ENCODE measurements at regions of chr7 and their contacts with region 1.

Region 1: GRCh38 chr7:41538810-41539724 is 163.8 kb downstream of the INHBA start:
- DNase-seq: no peak

Region 2: GRCh38 chr7:40024841-40025240 is 1514.2 kb before region 1 on chr7:
- intact Hi-C with region 1: loop called in 1 of 2 experiments (anchors 5 kb)
- DNase-seq: no peak

Region 3: DNA sequence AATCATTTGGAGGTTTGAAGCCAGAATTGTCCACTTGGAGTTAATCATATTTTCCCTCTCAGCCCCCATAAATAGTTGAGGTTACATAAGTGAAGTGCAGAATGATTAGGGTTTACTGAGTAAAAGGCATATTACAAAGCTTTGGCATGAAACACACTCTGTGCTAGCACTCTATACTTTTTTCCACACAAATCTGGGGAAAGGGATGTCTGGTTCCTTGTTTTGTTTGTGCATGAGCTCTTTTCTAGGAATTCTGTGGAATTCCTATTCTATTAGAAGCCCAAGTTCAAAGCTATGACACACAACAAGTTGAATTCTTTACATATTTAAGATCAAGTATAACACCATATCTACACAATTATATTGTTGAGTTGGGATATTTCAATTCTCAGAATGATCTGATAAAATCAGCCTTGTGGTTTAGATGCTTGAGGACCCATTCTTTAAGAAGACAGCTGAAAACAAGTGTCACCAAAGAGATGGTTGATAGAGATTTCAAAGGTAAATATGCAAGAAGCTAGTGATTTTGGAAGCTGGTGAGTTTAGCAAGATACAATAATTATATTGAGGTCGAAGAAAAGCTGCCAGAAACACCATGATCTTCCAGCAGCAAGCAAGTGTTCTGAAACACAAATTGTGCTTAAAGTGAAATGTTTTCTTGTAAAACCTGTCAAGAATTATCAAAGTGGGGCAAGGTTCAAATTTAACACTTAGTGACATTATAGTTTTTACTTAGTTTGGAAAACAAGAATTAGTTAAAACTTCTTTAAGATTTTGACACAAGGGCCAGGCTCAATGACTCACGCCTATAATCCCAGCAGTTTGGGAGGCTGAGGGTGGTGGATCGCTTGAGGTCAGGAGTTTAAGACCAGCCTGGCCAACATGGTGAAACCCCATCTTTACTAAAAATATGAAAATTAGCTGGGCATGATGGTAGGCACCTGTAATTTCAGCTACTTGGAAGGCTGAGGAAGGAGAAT is 41.2 kb after region 1 on chr7:
- intact Hi-C with region 1: no loop called
- DNase-seq: no peak